WTC11 (cell line): ENCODE measurements at regions of chr5 and their contacts with region 1.

Region 1: GRCh38 chr5:135565725-135566421 is 12.9 kb downstream of the CXCL14 start:
- DNase-seq: peak; percentile 88
- ATAC-seq: peak; percentile 64
- H3K4me3 Mint-ChIP-seq: no peak overlapping the region
- H3K27ac Mint-ChIP-seq: no peak overlapping the region
- H3K4me1 Mint-ChIP-seq: peaks cover 37% of the 10 kb centered on the region
- H3K27me3 Mint-ChIP-seq: peaks cover 17% of the 10 kb centered on the region
- CTCF ChIP-seq: peak; percentile 77; the same call in 1 of the 2 replicates

Region 2: GRCh38 chr5:135246923-135247795 is 318.7 kb before region 1 on chr5:
- CTCF ChIA-PET with region 1: no interaction called
- POLR2A ChIA-PET with region 1: no interaction called
- DNase-seq: no peak
- ATAC-seq: peak; percentile 62; the same call in 1 of the 2 replicates
- H3K4me3 Mint-ChIP-seq: no peak overlapping the region
- H3K27ac Mint-ChIP-seq: no peak overlapping the region
- H3K4me1 Mint-ChIP-seq: 0 out of 2 replicates have a peak, but pooled peaks cover 5% of the 10 kb centered on the region
- H3K27me3 Mint-ChIP-seq: no peaks in the 10 kb centered on the region
- CTCF ChIP-seq: no peak

Region 3: DNA sequence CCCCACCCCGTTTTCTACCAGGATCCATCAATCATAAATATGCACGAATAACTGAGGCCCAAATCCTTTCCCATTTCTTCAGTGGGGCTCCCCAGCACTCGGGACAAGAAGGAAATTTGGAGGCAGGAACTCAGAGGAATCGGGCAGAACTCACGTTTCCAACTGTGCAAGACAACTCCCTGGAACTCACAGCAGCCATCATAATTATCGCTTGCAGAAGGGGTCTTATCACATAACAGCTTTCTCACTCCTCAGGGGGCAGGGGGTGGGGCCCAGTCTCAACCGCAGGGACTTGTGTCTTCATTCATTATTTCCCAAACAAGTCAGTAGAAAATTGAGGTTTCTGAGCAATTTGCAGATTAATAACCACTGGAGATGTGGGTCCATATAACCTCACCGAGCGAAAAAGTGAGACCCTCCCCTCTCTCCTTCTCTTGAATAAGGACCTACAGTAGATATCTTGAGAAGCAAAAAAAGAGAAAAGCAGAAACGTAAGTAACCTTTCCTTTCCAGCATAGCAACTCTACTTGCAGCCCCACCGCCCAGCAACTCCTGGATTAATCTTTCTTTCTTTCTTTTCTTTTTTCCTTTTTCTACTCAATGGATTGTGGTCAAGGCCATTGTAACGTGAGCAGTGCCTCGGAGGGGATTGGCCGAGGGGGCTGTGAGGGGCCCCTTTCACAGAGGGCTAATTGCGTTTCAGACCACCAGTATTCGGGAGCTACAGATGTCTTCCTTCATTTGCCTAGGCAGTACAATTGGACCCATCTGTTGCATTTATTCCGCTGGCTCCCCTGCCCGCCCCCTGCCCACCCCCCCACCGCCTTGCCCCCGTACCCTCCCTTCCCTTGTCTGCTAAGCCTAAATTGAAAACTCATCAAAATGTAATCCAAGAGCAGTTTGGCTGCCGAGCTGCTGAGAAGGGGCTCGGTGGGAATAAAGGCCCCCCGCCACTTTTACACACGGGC is 89.0 kb before region 1 on chr5:
- CTCF ChIA-PET with region 1: interaction called, 16 read pairs
- POLR2A ChIA-PET with region 1: no interaction called
- DNase-seq: no peak
- ATAC-seq: no peak
- H3K4me3 Mint-ChIP-seq: no peak overlapping the region
- H3K27ac Mint-ChIP-seq: no peak overlapping the region
- H3K4me1 Mint-ChIP-seq: peaks cover 28% of the 10 kb centered on the region
- H3K27me3 Mint-ChIP-seq: peaks cover 70% of the 10 kb centered on the region
- CTCF ChIP-seq: no peak

Region 4: DNA sequence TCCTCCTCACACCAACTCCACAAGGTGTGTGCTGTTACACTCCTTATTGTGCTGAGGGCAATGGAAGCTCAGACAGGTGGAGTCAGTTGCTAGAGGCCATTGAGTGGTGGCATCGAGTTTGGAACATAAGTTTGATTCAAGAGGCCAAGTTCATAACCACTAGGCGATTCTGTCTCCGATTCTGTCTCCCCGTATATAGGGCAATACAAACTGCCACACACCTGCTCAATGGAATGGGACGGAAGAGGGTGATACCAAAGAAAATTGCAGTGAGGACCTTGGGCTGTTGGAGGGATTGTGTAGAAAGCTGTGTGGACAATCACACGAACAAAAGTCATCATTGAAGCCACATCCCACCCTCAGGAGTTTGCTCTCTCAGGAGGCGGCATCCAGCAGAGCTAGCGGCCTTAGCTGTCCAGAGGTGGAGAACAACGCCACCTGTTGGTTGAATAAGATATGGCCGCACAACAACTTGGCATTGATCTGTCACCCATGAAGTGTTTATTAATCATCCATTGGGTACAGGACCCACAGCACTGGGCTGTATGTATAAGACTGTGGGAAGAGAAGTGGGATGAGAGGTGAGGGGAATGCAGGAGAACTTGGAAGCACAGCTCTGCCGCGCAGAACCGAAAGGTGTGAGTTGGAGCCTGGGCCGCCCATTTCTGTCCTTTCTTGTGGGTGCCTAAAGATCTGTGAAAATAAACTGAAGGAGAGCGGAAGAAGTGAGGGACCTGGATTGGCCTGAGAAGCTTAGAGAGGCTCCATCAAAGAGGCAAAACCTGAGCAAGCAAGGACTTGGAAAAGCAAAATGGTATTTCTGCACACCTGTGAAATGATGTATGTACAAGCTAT is 14.1 kb before region 1 on chr5:
- CTCF ChIA-PET with region 1: interaction called, 88 read pairs
- POLR2A ChIA-PET with region 1: interaction called, 4 read pairs
- DNase-seq: peak; percentile 79
- ATAC-seq: peak; percentile 80
- H3K4me3 Mint-ChIP-seq: no peak overlapping the region
- H3K27ac Mint-ChIP-seq: no peak overlapping the region
- H3K4me1 Mint-ChIP-seq: 0 out of 2 replicates have a peak, but pooled peaks cover 3% of the 10 kb centered on the region
- H3K27me3 Mint-ChIP-seq: peaks cover 69% of the 10 kb centered on the region
- CTCF ChIP-seq: peak; percentile 63

Region 5: DNA sequence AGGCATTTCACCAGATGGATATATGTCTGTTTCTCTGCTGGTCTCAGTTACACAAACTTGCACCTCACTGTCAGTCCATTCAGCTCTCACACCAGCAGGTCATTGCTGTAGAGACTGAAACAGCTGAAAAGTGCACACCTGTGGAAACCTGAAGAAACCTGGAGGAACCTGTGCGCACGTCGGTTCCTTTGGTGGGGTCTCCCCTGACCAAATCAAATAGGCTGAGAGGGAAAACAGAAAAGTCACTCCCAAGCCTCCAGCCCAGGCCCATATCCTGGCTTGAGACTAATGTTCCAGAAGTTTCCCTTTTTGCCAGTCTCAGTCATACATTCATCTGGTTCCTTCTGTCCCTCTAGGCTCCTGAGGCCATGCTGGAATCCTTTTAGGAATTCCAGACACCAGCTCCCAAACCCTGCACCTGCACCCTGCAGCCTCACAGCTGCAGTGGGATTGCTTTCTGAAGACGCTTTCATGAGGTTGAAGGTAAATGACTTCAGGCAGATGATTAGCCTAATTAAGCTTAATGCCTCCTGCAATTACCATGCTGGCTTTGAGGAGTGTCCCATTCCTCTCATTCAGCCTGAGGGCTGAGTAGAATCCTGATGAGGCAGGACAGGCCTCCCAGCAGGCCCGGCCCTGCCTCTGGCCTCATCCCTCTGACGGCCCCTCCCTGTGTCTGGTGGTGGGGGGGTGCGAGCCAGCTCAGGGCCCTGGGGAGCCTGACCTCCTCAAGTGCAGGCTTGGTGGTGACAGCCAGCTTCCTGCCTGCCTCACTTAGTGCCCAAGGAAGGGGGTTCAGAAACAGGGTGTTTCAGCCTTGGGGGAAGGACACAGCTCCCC is 37.2 kb after region 1 on chr5:
- CTCF ChIA-PET with region 1: interaction called, 12 read pairs
- POLR2A ChIA-PET with region 1: no interaction called
- DNase-seq: peak; percentile 17
- ATAC-seq: peak; percentile 77
- H3K4me3 Mint-ChIP-seq: no peak overlapping the region
- H3K27ac Mint-ChIP-seq: no peak overlapping the region
- H3K4me1 Mint-ChIP-seq: peaks cover 14% of the 10 kb centered on the region
- H3K27me3 Mint-ChIP-seq: peaks cover 42% of the 10 kb centered on the region
- CTCF ChIP-seq: no peak

Region 6: GRCh38 chr5:135729321-135729786 is 163.5 kb after region 1 on chr5:
- CTCF ChIA-PET with region 1: interaction called, 80 read pairs
- POLR2A ChIA-PET with region 1: interaction called, 3 read pairs
- DNase-seq: no peak
- ATAC-seq: 0 out of 2 replicates have a peak, but pooled peaks have one; percentile 41
- H3K4me3 Mint-ChIP-seq: no peak overlapping the region
- H3K27ac Mint-ChIP-seq: no peak overlapping the region
- H3K4me1 Mint-ChIP-seq: peaks cover 11% of the 10 kb centered on the region
- H3K27me3 Mint-ChIP-seq: no peaks in the 10 kb centered on the region
- CTCF ChIP-seq: no peak

Region 7: GRCh38 chr5:135829681-135830383 is 264.0 kb after region 1 on chr5:
- CTCF ChIA-PET with region 1: interaction called, 81 read pairs
- POLR2A ChIA-PET with region 1: interaction called, 4 read pairs
- DNase-seq: peak; percentile 80
- ATAC-seq: peak; percentile 18
- H3K4me3 Mint-ChIP-seq: no peak overlapping the region
- H3K27ac Mint-ChIP-seq: no peak overlapping the region
- H3K4me1 Mint-ChIP-seq: 0 out of 2 replicates have a peak, but pooled peaks cover 2% of the 10 kb centered on the region
- H3K27me3 Mint-ChIP-seq: peaks cover 49% of the 10 kb centered on the region
- CTCF ChIP-seq: peak; percentile 92

Region 8: DNA sequence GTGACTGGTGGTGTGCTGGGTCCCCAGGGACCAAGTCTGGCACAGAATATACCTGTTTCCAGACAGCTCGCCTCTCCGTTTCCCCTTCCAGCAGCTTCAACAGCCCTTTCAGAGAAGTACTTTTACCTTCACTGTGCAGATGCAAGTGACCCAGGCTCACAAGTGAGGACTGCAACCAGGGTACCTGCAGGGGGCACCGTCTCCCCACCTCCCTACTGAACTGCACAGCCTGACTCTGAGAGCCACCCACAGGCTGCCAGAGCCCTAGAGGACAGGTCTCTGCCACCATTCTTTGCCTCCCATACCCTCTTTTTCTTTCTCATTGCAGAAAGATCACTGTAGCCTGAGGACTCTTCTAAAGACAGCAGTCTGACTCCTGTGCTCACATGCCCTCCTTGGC is 314.4 kb after region 1 on chr5:
- CTCF ChIA-PET with region 1: interaction called, 17 read pairs
- POLR2A ChIA-PET with region 1: no interaction called
- DNase-seq: peak; percentile 72
- ATAC-seq: peak; percentile 93
- H3K4me3 Mint-ChIP-seq: no peak overlapping the region
- H3K27ac Mint-ChIP-seq: no peak overlapping the region
- H3K4me1 Mint-ChIP-seq: peaks cover 22% of the 10 kb centered on the region
- H3K27me3 Mint-ChIP-seq: no peaks in the 10 kb centered on the region
- CTCF ChIP-seq: 0 out of 2 replicates have a peak, but pooled peaks have one; percentile 25